Cardiac septum (tissue), 1 donor: ENCODE measurements at regions of chr2 and their contacts with region 1.

Region 1: GRCh38 chr2:31997653-31998052 is 13.2 kb downstream of the MEMO1 start:
- DNase-seq: no peak

Region 2: DNA sequence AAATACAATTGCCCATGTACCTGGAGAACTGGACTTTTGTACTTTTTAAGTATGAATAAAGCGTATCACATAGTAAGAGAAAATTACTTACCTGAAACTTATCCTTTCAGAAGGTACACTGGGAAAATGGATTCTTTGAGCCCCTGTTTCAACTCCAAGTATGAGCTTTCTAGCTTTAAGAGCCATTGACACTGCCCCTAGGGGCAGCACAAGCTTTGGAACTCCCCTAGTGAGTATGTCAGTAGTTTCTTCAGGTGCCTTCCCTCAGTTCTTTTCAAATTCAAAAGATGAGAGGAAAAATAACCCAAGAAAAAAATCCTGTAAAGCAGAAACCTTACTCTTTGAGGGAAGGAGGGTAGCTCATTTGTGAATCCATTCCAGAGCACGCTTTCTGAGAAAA is 111.0 kb before region 1 on chr2:
- intact Hi-C with region 1: loop called (anchors 10 kb)
- DNase-seq: no peak